Endothelial cell of umbilical vein (primary cell): ENCODE measurements at regions of chr3 and their contacts with region 1.

Region 1: GRCh38 chr3:115040673-115041286 is 106.3 kb downstream of the ZBTB20 start:
- DNase-seq: peak; percentile 67
- H3K4me3 ChIP-seq: no peak overlapping the region
- H3K27ac ChIP-seq: no peak overlapping the region
- H3K4me1 ChIP-seq: no peaks in the 10 kb centered on the region
- H3K27me3 ChIP-seq: no peaks in the 10 kb centered on the region
- CTCF ChIP-seq: peak; percentile 58 to 59
- POLR2A ChIP-seq: no peak

Region 2: DNA sequence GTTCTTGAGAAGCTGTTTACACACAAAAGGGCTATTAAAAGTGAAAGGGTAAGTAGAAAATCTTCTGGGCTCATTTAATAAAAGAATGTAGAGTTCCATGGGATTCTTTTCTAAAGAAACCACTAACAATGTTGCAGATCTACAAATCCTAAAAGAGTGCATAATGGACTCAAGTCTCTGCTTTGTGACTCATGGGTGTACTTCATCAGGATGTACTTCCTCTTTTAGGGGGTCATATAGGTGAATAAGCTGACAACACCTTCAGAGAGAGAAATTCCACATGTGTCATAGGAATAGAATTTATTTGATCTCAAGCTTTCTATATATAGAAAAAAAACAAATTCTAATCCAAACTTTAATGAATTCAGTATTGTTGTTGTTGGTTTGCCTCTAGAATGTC is 391.4 kb before region 1 on chr3:
- CTCF ChIA-PET with region 1: no interaction called
- POLR2A ChIA-PET with region 1: no interaction called
- dilution Hi-C with region 1: no loop called
- intact Hi-C with region 1: no loop called
- DNase-seq: peak; percentile 28
- H3K4me3 ChIP-seq: no peak overlapping the region
- H3K27ac ChIP-seq: peak overlapping the region; percentile 55
- H3K4me1 ChIP-seq: peaks cover 24% of the 10 kb centered on the region
- H3K27me3 ChIP-seq: no peaks in the 10 kb centered on the region
- CTCF ChIP-seq: no peak
- POLR2A ChIP-seq: no peak

Region 3: GRCh38 chr3:115052906-115053305 is 12.1 kb after region 1 on chr3:
- CTCF ChIA-PET with region 1: interaction called, 17 read pairs
- POLR2A ChIA-PET with region 1: no interaction called
- dilution Hi-C with region 1: no loop called
- intact Hi-C with region 1: no loop called
- DNase-seq: no peak
- H3K4me3 ChIP-seq: no peak overlapping the region
- H3K27ac ChIP-seq: no peak overlapping the region
- H3K4me1 ChIP-seq: no peaks in the 10 kb centered on the region
- H3K27me3 ChIP-seq: no peaks in the 10 kb centered on the region
- CTCF ChIP-seq: no peak
- POLR2A ChIP-seq: no peak

Region 4: GRCh38 chr3:115562636-115563267 is 522.0 kb after region 1 on chr3:
- CTCF ChIA-PET with region 1: no interaction called
- POLR2A ChIA-PET with region 1: no interaction called
- dilution Hi-C with region 1: no loop called
- intact Hi-C with region 1: no loop called
- DNase-seq: no peak
- H3K4me3 ChIP-seq: no peak overlapping the region
- H3K27ac ChIP-seq: no peak overlapping the region
- H3K4me1 ChIP-seq: no peaks in the 10 kb centered on the region
- H3K27me3 ChIP-seq: peaks cover 5 to 6% of the 10 kb centered on the region in 2 experiments
- CTCF ChIP-seq: no peak
- POLR2A ChIP-seq: no peak